Thyroid gland (tissue), 4 donors: ENCODE measurements at regions of chr10 and their contacts with region 1.

Region 1: GRCh38 chr10:35218339-35218955 is 91.8 kb downstream of the CREM start:
- DNase-seq: peak; percentile 83 to 88
- H3K4me3 ChIP-seq: no peak overlapping the region
- H3K27ac ChIP-seq: no peak overlapping the region
- H3K4me1 ChIP-seq: peaks cover 4 to 23% of the 10 kb centered on the region in 2 donors
- H3K27me3 ChIP-seq: no peaks in the 10 kb centered on the region
- CTCF ChIP-seq: peak; percentile 65 to 90 (median 78)
- POLR2A ChIP-seq: no peak

Region 2: GRCh38 chr10:35112571-35112970 is 105.9 kb before region 1 on chr10:
- intact Hi-C with region 1: loop called (anchors 5 kb)
- DNase-seq: no peak
- H3K4me3 ChIP-seq: no peak overlapping the region
- H3K27ac ChIP-seq: no peak overlapping the region
- H3K4me1 ChIP-seq: no peaks in the 10 kb centered on the region
- H3K27me3 ChIP-seq: no peaks in the 10 kb centered on the region
- CTCF ChIP-seq: no peak
- POLR2A ChIP-seq: no peak